Thyroid gland (tissue), 4 donors: ENCODE measurements at regions of chr2 and their contacts with region 1.

Region 1: GRCh38 chr2:131413148-131413747 is 49.3 kb upstream of the RAB6D start:
- DNase-seq: peak in 1 of 2 donors; percentile 16
- H3K4me3 ChIP-seq: no peak overlapping the region
- H3K27ac ChIP-seq: no peak overlapping the region
- H3K4me1 ChIP-seq: no peaks in the 10 kb centered on the region
- H3K27me3 ChIP-seq: no peaks in the 10 kb centered on the region
- CTCF ChIP-seq: peak; percentile 59 to 95 (median 72)
- POLR2A ChIP-seq: no peak

Region 2: DNA sequence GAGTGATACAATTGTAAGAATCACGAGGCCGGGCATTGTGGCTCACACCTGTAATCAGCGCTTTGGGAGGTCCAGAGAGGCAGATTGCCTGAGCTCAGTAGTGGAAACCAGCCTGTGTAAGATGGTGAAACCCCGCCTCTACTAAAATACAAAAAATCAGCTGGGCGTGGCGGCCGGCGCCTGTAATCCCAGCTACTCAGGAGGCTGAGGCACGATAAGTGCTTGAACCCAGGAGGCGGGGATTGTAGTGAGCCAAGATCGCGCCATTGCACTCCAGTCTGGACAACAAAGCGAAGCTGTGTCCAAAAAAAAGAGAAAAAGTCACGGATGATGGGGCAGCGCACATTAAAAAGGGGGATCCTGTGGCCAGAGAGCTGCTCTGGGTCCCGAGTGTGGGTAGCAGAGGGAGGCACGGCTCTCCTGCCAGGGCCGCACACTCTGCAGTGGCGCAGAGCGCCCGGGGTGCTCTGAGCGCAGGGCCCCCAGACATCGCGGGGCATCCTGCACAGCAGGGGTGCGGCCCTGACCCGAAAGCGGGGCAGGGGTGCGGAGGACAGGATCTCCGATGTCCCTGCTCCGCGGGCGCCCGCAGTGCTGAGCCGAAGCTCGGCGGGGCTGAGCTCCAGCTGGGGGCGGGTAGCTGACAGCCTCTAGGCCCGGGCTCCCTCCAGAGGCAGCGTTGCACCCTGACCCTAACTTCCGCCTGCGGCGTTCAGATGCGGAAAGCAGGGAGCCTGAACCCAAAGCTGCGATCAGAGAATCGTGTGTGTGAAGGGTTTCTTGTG is 18.9 kb before region 1 on chr2:
- intact Hi-C with region 1: no loop called
- DNase-seq: peak in 1 of 2 donors; percentile 31
- H3K4me3 ChIP-seq: no peak overlapping the region
- H3K27ac ChIP-seq: no peak overlapping the region
- H3K4me1 ChIP-seq: no peaks in the 10 kb centered on the region
- H3K27me3 ChIP-seq: no peaks in the 10 kb centered on the region
- CTCF ChIP-seq: no peak
- POLR2A ChIP-seq: no peak

Region 3: GRCh38 chr2:131517106-131517831 is 104.0 kb after region 1 on chr2:
- intact Hi-C with region 1: loop called (anchors 10 kb)
- DNase-seq: no peak
- H3K4me3 ChIP-seq: no peak overlapping the region
- H3K27ac ChIP-seq: no peak overlapping the region
- H3K4me1 ChIP-seq: peaks cover 0 to 16% of the 10 kb centered on the region in 2 donors
- H3K27me3 ChIP-seq: no peaks in the 10 kb centered on the region
- CTCF ChIP-seq: no peak
- POLR2A ChIP-seq: no peak